Activated CD4-positive, alpha-beta memory T cell treated with anti-CD3 and anti-CD28 coated beads, Interleukin-2, amount 10 ng/mL, durations not matched to agents 7 days and 5 days (primary cell): ENCODE measurements at regions of chr12 and their contacts with region 1.

Region 1: GRCh38 chr12:132414634-132415326 is 75.2 kb upstream of the FBRSL1 start:
- DNase-seq: peak; percentile 79
- H3K4me3 Mint-ChIP-seq: no peak overlapping the region
- H3K27ac Mint-ChIP-seq: no peak overlapping the region
- H3K4me1 Mint-ChIP-seq: peaks cover 2% of the 10 kb centered on the region
- H3K27me3 Mint-ChIP-seq: no peaks in the 10 kb centered on the region

Region 2: DNA sequence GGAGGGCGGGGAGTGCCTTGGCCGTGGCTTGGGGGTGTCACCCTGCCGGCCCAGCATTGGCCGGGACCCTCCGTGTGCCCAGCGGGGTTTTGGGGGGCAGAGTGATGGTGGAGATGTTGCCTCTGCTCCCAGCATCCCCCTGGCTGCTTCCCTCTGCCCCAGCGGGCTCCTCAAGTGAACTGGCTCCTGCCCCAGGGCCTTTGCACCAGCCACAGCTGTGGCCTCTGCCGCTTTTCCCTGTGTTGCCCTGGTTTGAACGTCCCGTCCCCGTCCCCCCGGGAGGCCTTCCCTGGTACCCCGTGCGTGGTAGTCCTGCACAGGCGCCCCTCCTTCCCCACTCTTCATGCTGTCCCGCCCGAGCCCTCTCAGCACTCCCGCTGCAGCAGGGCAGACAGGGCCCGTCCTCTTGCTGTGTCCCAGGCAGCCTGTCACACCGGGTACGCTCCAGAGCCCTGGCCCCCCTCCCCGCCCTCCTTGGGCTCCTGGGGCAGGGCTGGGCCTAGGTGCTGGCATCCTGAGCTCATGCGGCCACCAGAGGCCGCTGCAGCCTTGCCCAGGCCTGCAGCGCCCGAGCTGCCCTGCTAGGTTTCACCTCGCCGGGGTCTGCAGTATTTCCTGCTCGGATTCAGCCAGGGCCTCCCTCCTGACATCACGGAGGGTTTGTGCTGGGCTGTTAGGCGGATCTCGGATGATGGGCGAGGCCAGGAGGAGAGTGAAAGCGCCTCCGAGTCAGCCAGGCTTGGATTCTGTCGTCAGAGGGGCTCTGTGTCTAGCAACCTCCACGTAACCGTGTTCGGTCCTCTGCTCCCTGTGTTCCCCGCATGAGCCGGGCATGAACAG is 261.1 kb before region 1 on chr12:
- CTCF ChIA-PET with region 1: interaction called, 15 read pairs
- POLR2A ChIA-PET with region 1: interaction called, 3 read pairs
- DNase-seq: peak; percentile 73
- H3K4me3 Mint-ChIP-seq: no peak overlapping the region
- H3K27ac Mint-ChIP-seq: no peak overlapping the region
- H3K4me1 Mint-ChIP-seq: no peaks in the 10 kb centered on the region
- H3K27me3 Mint-ChIP-seq: no peaks in the 10 kb centered on the region

Region 3: DNA sequence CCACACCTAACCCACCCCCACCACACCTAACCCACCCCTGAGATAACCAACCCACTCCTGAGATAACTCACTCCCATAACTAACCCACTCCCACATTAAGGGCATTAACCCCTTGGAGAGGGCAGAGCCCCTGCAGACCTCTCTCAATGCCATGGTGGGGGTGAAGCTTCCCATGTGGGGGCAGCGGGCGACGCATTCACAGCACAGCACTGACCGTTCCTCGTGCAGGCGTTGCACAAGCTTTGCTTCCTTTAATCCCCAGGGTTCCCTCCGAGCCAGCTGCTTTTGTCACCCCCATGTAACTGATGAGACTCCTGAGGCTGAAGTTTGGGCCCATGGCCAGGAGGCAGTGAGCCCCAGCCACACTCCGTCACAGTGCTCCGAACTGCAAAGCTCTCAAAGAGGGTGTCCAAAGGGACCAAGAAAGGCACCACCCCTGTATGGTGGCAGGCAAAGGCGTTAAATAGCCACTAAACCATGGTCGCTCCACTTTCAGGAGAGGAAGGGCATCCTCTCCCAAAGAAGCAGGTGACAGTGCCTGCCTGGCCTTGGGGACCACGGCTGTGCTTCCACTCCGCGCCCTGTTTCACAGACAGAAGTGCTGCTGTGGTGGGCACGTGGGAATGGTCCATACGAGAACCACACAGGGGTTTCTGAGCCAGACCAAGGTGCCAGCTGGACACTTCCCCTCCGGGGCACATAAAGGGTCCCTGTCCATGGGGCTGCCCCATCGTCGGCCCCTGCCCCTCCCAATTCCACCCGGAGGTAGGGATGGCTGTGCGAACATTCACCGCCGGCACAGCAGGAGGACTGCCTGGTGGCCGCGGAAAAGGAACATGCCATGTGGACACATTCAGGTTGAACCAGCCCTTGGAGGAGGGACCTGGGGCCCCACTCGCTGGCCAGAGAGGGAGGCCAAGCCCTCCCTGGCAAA is 113.7 kb before region 1 on chr12:
- CTCF ChIA-PET with region 1: no interaction called
- POLR2A ChIA-PET with region 1: no interaction called
- DNase-seq: no peak
- H3K4me3 Mint-ChIP-seq: no peak overlapping the region
- H3K27ac Mint-ChIP-seq: no peak overlapping the region
- H3K4me1 Mint-ChIP-seq: no peaks in the 10 kb centered on the region
- H3K27me3 Mint-ChIP-seq: no peaks in the 10 kb centered on the region

Region 4: DNA sequence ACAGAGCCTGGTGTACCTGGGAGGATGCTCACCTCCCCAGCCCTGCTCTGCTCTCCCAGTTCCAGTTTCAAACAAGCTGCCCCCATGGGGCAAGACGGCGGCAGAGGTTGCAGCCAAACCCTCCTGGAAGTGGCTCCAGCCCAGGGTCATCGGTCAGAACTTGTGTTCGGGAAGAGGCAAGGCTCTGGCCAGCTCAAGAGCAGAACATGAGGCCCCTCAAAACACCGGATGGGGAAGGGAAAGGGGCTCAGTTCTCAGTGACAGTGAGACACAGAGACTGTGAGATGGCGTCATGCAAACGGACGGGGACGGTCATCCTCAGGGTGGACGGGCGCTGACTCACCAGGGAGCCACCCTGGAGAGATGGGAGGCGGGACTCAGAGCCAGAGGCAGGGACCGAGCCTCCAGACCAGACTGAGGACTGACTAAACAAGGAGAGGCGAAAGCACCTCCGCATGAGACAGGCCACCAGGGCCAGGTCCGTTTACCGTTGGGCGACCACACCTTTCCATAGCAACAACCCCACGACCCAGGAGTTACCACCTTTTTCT is 21.5 kb before region 1 on chr12:
- CTCF ChIA-PET with region 1: no interaction called
- POLR2A ChIA-PET with region 1: no interaction called
- DNase-seq: no peak
- H3K4me3 Mint-ChIP-seq: no peak overlapping the region
- H3K27ac Mint-ChIP-seq: no peak overlapping the region
- H3K4me1 Mint-ChIP-seq: no peaks in the 10 kb centered on the region
- H3K27me3 Mint-ChIP-seq: no peaks in the 10 kb centered on the region

Region 5: DNA sequence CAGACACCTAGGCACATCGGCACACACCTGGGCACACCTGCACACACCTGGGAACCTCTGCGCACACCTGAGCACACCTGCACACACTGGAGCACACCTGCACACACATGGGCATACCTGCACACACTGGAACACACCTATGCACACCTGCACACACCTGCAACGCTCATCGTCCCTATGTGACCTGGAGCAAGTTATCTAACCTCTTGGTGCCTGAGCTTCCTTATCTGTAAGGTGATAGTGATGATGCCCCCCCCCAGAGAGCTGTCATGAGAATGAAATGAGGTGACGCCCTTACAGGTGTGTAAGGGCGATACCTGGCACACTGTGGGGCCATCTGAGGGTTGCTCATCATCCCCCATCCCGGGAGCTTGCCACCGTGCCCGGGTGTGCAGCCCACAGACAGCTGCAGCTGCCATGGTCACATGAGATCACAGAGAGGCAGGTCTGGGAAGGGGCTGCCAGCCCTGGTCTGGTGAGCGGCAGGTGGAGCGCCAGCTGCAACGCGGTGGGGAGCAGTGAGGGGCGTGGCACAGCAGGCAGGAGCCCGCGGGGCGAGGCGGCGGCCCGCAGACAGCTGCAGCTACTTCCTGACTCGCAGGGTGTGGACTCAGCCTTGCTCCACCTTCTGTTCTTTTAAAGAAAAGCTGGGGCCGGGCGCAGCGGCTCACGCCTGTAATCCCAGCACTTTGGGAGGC is 15.3 kb after region 1 on chr12:
- CTCF ChIA-PET with region 1: interaction called, 12 read pairs
- POLR2A ChIA-PET with region 1: interaction called, 5 read pairs
- DNase-seq: peak; percentile 78
- H3K4me3 Mint-ChIP-seq: peak overlapping the region; percentile 62
- H3K27ac Mint-ChIP-seq: peak overlapping the region; percentile 64
- H3K4me1 Mint-ChIP-seq: peaks cover 26% of the 10 kb centered on the region
- H3K27me3 Mint-ChIP-seq: peaks cover 6% of the 10 kb centered on the region

Region 6: DNA sequence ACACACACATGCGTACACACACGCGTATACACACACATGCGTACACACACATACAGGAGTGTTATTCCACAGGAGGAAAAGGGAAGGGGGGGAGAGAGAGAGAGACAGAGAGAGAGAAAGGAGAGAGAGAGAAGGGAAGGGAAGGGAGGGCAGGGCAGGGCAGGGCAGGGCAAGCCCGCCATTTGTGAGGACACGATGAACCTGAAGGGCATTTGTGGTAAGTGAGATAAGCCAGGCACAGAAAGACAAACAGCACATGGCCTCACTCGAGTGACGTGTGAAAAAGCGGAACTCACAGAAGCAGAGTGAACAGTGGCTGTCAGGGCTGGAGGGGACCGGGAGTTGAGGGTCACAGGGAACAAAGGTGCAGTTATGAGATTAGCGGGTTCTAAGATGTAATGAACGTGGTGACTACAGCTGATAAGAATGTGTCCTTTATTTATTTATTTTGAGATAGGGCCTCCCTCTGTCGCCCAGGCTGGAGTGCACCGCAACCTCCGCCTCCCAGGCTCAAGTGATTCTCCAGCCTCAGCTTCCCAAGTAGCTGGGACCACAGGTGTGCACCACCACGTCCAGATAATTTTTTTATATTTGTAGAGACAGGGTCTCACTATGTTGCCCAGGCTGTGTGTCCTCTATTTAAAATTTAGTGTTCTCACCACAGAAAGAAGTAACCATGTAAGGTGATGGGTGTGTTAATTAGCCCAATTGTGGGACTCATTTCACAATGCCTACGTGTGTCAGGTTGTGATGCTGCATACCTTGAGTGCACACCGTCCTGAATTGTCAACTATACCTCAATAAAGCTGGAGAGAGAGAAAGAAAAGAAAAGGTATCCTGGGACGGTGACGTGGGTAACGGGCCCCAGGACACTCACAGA is 56.4 kb after region 1 on chr12:
- CTCF ChIA-PET with region 1: no interaction called
- POLR2A ChIA-PET with region 1: no interaction called
- DNase-seq: no peak
- H3K4me3 Mint-ChIP-seq: no peak overlapping the region
- H3K27ac Mint-ChIP-seq: no peak overlapping the region
- H3K4me1 Mint-ChIP-seq: peaks cover 28% of the 10 kb centered on the region
- H3K27me3 Mint-ChIP-seq: peaks cover 23% of the 10 kb centered on the region

Region 7: GRCh38 chr12:132523576-132524331 is 109.0 kb after region 1 on chr12:
- CTCF ChIA-PET with region 1: interaction called, 35 read pairs
- POLR2A ChIA-PET with region 1: interaction called, 6 read pairs
- DNase-seq: peak; percentile 76
- H3K4me3 Mint-ChIP-seq: no peak overlapping the region
- H3K27ac Mint-ChIP-seq: no peak overlapping the region
- H3K4me1 Mint-ChIP-seq: no peaks in the 10 kb centered on the region
- H3K27me3 Mint-ChIP-seq: no peaks in the 10 kb centered on the region

Region 8: DNA sequence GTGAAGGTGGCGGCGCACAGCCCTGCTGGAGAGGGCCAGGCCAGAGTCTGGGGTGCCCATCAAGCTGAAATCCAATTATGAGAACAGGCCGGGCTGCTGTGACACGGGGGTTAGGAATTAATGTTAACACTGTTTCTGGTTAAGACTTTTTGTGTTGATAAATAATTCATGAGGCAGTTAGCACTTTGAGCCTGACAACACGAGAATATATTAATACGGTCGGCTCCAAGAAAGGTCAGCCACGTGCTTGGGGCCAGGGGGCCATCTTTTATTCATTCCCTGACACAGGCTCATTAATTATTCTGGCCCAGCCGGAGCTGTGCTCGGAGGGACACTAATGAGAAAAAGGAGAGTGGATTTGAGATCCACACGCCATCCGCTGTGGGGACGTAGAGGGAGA is 120.2 kb after region 1 on chr12:
- CTCF ChIA-PET with region 1: no interaction called
- POLR2A ChIA-PET with region 1: no interaction called
- DNase-seq: no peak
- H3K4me3 Mint-ChIP-seq: no peak overlapping the region
- H3K27ac Mint-ChIP-seq: no peak overlapping the region
- H3K4me1 Mint-ChIP-seq: no peaks in the 10 kb centered on the region
- H3K27me3 Mint-ChIP-seq: no peaks in the 10 kb centered on the region

Region 9: DNA sequence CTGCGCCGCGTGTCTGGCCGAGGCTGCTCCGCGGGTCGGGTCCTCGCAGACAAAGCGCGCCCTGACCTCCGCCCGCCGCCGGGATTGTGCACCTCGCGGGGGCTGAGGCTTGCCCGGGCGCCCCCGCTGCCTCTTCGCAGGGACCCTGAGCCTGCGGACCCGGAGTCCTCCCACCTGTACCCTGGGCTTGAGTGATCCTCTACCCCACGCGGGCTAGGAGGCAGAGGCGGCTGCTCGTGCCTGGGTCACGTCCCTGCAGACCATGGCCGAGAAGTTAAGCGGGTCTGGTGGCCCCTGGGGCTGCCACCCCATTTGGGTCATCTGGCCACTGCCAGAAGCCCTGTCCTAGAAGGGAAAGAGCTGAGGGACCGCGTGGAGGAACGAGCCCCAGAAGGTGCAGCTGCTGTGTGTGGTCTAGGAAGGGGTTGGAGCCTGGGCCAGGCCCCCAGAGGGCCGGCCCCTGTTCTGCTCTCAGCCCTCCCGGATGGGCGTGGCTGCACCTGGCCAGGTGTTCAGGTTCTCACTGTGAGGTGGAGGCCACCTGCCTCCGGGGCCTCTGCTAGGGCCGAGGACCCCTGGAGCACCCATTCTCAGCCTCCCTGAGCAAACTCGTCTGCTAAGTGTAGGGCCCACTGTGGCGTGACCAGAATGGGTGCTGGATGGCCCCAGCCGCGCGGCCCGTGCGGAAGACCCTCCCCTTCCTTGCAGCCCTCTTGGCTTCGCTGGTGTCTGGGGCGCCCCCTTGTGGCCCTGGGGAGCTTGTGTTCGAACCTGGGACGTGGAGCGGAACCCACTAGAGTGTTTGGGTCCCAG is 146.0 kb after region 1 on chr12:
- CTCF ChIA-PET with region 1: interaction called, 18 read pairs
- POLR2A ChIA-PET with region 1: no interaction called
- DNase-seq: peak; percentile 71
- H3K4me3 Mint-ChIP-seq: peak overlapping the region; percentile 52
- H3K27ac Mint-ChIP-seq: no peak overlapping the region
- H3K4me1 Mint-ChIP-seq: peaks cover 10% of the 10 kb centered on the region
- H3K27me3 Mint-ChIP-seq: peaks cover 13% of the 10 kb centered on the region

Region 10: GRCh38 chr12:132614861-132615578 is 200.2 kb after region 1 on chr12:
- CTCF ChIA-PET with region 1: interaction called, 19 read pairs
- POLR2A ChIA-PET with region 1: no interaction called
- DNase-seq: peak; percentile 81
- H3K4me3 Mint-ChIP-seq: no peak overlapping the region
- H3K27ac Mint-ChIP-seq: no peak overlapping the region
- H3K4me1 Mint-ChIP-seq: peaks cover 5% of the 10 kb centered on the region
- H3K27me3 Mint-ChIP-seq: peaks cover 31% of the 10 kb centered on the region